ENCODE measurements at regions of chr16 and their contacts with region 1.

Region 1: DNA sequence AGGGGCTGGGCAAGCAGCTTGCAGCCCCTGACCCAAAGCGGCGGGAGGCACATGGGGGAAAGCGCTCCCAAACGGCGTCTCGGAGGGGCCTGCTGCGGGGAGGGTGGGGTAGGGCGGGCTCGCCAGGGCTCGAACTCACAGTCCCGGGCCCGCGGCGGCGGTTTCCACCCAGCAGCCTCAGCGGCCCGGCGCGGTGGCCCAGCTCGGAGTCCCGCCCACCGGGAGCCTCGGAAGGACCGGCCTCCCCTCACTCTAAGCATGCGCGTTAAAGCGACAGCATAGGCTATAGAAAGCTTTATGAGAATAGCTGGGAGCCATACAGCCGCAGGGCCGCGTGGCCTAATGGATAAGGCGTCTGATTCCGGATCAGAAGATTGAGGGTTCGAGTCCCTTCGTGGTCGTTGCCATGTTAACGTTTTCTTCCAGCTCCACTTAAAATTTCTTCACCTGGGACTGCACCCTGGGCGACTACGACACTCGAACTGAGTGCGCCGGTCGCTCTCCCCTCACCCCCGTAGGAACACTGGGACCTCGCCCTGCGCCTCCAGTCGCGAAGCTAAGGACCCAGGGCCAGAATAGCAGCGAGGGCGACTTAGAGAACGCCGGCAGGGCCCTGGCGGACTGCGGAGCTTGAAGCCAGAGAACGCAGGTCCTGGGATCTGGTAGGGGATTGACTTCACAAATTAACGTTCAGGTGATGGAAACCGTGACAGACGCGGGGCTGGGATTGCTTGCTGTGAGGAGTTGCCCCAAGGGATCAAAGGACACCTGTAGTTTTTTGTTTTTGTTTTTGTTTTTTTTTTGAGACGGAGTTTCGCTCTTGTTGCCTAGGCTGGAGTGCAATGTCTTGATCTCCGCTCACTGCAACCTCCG is 15.8 kb downstream of the ZNF213 start:
- DNase-seq: peak; percentile 80
- H3K4me3 ChIP-seq: peak overlapping the region; percentile 55
- H3K27me3 ChIP-seq: no peaks in the 10 kb centered on the region
- CTCF ChIP-seq: no peak

Region 2: DNA sequence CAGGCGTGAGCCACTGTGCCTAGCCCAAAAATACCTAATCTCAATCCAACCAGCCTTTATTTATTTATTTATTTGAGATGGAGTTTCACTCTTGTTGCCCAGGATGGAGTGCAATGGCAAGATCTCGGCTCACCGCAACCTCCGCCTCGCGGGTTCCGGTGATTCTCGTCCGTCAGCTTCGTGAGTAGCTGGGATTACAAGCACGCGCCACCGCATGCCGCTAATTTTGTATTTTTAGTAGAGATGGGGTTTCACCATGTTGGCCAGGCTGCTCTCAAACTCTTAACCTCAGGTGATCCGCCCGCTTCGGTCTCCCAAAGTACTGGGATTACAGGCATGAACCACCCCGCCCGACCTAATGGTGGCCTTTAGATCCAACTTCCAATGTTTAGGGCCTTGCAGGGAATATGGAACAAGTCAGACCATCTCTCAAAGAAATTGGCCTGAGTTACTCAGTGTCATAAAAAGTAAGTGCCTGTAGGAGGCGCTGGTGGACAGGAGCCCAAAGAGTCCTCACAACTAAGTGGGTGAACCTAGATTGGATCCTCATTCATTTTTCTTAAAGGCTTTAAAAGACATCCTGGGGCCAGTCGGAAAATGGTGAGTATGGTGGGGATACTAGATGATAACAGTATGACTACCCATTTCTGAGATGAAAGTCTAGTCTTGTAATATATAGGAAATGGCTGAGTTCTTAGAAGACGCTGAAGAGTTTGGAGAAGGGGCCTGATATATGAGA is 56.1 kb before region 1 on chr16:
- CTCF ChIA-PET with region 1: no interaction called
- POLR2A ChIA-PET with region 1: no interaction called
- DNase-seq: no peak
- H3K4me3 ChIP-seq: no peak overlapping the region
- H3K27me3 ChIP-seq: peaks cover 23% of the 10 kb centered on the region
- CTCF ChIP-seq: peak; percentile 56

Region 3: GRCh38 chr16:3173892-3174617 is 23.5 kb after region 1 on chr16:
- CTCF ChIA-PET with region 1: interaction called, 15 read pairs
- POLR2A ChIA-PET with region 1: no interaction called
- DNase-seq: no peak
- H3K4me3 ChIP-seq: no peak overlapping the region
- H3K27me3 ChIP-seq: peaks cover 9% of the 10 kb centered on the region
- CTCF ChIP-seq: peak; percentile 26

Measured in BJ (cell line).